Activated CD4-positive, alpha-beta memory T cell treated with anti-CD3 and anti-CD28 coated beads for 36 hours (primary cell): ENCODE measurements at regions of chr11 and their contacts with region 1.

Region 1: DNA sequence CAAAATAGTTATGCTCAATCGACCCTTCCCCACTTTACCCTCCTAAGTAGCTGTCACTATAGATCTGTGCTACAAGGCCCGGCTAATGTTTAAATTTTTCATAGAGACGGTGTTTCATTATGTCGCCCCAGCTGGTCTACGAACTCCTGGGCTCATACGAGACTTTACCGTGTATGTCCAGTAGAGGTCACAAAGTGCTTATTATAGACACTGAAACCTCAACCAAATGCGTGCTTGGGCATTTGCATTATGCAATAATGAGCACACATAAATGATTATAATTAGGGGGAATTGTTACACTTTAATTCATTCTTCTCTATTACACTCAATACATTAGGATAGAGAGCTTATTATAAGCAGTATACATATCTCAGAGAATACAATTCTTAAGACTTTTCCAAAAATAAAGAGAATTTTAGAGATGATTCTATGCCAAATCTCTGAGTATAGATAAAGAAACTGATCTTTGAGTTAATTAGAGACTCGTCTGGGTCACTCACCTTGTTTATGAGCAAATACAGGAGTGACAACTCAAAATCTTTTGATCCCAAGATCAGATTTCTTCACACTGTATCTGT is 12.5 kb upstream of the MRPL16 start:
- DNase-seq: peak; percentile 17
- H3K4me3 Mint-ChIP-seq: no peak overlapping the region
- H3K27ac Mint-ChIP-seq: no peak overlapping the region
- H3K4me1 Mint-ChIP-seq: peaks cover 8% of the 10 kb centered on the region
- H3K27me3 Mint-ChIP-seq: no peaks in the 10 kb centered on the region

Region 2: GRCh38 chr11:59611570-59612565 is 211.2 kb before region 1 on chr11:
- CTCF ChIA-PET with region 1: no interaction called
- POLR2A ChIA-PET with region 1: no interaction called
- intact Hi-C with region 1: no loop called
- DNase-seq: no peak
- H3K4me3 Mint-ChIP-seq: no peak overlapping the region
- H3K27ac Mint-ChIP-seq: no peak overlapping the region
- H3K4me1 Mint-ChIP-seq: peaks cover 62% of the 10 kb centered on the region
- H3K27me3 Mint-ChIP-seq: no peaks in the 10 kb centered on the region

Region 3: DNA sequence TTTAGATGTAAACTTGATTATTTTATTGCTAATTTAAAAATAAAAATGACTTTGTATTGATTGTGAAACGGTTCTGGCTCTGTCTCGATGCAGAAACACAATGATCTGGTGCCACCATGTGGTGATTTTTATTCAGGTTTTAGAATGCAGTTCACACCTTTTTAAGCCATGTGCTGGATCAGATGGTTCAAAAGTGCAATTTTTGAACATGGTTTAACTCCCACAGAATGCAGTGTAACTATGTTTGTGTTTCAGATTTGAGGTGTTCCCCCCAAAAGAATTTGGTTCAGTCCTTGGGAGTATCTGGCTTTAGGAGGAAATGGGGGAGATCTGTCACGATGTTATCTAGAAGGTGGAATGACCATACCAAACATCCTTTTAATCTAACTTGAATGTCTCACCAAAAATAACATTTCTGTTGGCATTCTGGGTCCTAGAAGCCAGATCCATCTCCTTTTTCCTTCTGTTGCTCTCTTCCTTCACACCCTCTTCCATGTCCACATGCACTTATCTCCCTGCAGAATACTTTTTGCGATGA is 20.4 kb before region 1 on chr11:
- CTCF ChIA-PET with region 1: no interaction called
- POLR2A ChIA-PET with region 1: no interaction called
- intact Hi-C with region 1: no loop called
- DNase-seq: peak; percentile 31
- H3K4me3 Mint-ChIP-seq: no peak overlapping the region
- H3K27ac Mint-ChIP-seq: no peak overlapping the region
- H3K4me1 Mint-ChIP-seq: no peaks in the 10 kb centered on the region
- H3K27me3 Mint-ChIP-seq: no peaks in the 10 kb centered on the region

Region 4: DNA sequence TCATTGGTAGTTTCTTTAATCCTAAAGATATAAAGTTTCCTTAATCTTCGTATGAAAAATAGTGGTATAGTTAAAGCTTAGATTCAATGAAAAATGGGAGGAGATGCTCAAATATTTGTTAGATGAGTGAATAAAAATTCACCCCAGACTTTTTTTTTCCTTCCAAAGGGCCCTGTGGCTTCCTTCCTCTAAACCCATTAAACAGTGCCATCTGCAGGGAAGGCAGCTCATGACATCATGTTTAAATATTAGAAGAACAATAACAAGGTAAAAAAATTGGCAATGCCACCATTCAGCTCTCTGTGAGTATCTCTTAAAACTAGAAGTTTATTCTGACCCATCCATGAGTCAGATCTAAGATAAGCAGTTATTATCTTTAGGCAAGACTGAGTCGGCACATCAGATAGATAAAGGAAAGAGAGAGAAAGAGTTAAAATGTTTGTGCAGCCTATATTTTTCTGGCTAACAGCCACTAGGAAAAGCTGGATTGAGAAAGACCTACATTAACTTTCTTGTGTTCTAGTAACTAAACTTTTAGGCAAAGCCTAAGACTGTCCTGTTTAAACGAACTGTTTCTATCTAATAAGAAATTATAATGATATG is 96.0 kb after region 1 on chr11:
- CTCF ChIA-PET with region 1: interaction called, 27 read pairs
- POLR2A ChIA-PET with region 1: no interaction called
- intact Hi-C with region 1: loop called (anchors 1 kb)
- DNase-seq: peak; percentile 33
- H3K4me3 Mint-ChIP-seq: no peak overlapping the region
- H3K27ac Mint-ChIP-seq: no peak overlapping the region
- H3K4me1 Mint-ChIP-seq: no peaks in the 10 kb centered on the region
- H3K27me3 Mint-ChIP-seq: peaks cover 2% of the 10 kb centered on the region

Region 5: DNA sequence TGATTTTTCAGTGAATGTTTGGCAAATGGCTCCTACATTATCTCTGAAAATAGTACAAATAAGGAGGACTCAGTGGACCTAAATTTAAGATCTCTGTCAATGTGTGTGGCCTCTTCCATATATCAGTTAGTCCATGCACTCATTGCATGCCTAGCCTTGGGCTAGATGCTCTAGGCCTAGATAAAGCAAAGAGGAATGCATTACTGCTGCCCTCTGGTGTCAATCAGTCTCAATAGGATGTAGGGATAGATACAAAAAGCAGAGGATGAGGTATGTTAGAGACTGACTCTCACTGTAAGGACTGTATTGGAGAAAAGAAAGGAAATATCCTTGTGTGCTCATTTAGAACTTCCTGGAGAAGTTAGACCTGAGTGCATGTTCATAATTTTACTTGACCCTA is 307.4 kb after region 1 on chr11:
- CTCF ChIA-PET with region 1: no interaction called
- POLR2A ChIA-PET with region 1: no interaction called
- intact Hi-C with region 1: loop called (anchors 5 kb)
- DNase-seq: no peak
- H3K4me3 Mint-ChIP-seq: no peak overlapping the region
- H3K27ac Mint-ChIP-seq: no peak overlapping the region
- H3K4me1 Mint-ChIP-seq: no peaks in the 10 kb centered on the region
- H3K27me3 Mint-ChIP-seq: peaks cover 5% of the 10 kb centered on the region

Region 6: GRCh38 chr11:60193687-60194433 is 370.8 kb after region 1 on chr11:
- CTCF ChIA-PET with region 1: interaction called, 3 read pairs
- POLR2A ChIA-PET with region 1: no interaction called
- intact Hi-C with region 1: loop called (anchors 2 kb)
- DNase-seq: peak; percentile 71
- H3K4me3 Mint-ChIP-seq: no peak overlapping the region
- H3K27ac Mint-ChIP-seq: no peak overlapping the region
- H3K4me1 Mint-ChIP-seq: peaks cover 9% of the 10 kb centered on the region
- H3K27me3 Mint-ChIP-seq: peaks cover 10% of the 10 kb centered on the region